Activated naive CD4-positive, alpha-beta T cell treated with anti-CD3 and anti-CD28 coated beads for 36 hours (primary cell): ENCODE measurements at regions of chr7 and their contacts with region 1.

Region 1: GRCh38 chr7:16564909-16565426 is 38.3 kb downstream of the LRRC72 start:
- DNase-seq: peak; percentile 33
- H3K4me3 Mint-ChIP-seq: no peak overlapping the region
- H3K27ac Mint-ChIP-seq: peak overlapping the region; percentile 68
- H3K4me1 Mint-ChIP-seq: peaks cover 18% of the 10 kb centered on the region
- H3K27me3 Mint-ChIP-seq: no peaks in the 10 kb centered on the region

Region 2: GRCh38 chr7:16078076-16078952 is 486.7 kb before region 1 on chr7:
- CTCF ChIA-PET with region 1: interaction called, 37 read pairs
- intact Hi-C with region 1: loop called (anchors 1 kb)
- DNase-seq: peak; percentile 30
- H3K4me3 Mint-ChIP-seq: no peak overlapping the region
- H3K27ac Mint-ChIP-seq: no peak overlapping the region
- H3K4me1 Mint-ChIP-seq: no peaks in the 10 kb centered on the region
- H3K27me3 Mint-ChIP-seq: no peaks in the 10 kb centered on the region

Region 3: DNA sequence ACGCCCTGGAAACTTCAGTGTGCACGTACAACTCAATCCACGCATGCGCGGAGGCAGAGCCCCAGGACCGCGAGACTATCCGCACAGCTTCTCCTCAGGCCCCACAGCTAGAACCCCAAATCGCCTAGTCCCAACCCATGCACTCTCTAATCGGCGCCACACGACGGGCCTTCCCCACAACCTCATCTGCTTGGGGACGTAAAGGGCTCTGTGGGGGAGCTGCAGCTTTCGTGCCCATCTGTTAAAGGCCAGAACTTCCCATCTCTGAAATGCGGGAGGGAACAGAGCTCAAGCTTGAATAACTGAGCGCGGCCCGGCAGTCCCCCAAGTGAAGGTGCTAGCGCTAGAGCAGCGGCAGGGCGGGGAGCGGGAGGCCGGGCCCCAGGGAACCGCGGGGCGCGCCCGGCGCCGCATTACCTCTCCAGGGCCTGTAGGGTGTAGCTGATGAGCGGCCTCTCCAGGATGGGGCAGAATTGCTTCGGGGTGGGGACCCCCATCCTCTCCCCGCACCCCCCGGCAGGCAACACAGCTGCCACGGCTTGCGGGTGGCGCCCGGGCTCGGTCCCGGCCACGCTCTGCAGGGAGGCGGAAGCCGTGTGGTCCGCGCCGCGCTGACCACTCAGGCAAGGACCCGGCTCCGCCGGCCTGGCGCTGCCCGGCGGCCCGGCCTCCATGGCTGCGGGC is 144.2 kb before region 1 on chr7:
- CTCF ChIA-PET with region 1: interaction called, 18 read pairs
- intact Hi-C with region 1: no loop called
- DNase-seq: peak; percentile 90
- H3K4me3 Mint-ChIP-seq: peak overlapping the region; percentile 92
- H3K27ac Mint-ChIP-seq: peak overlapping the region; percentile 89
- H3K4me1 Mint-ChIP-seq: peaks cover 13% of the 10 kb centered on the region
- H3K27me3 Mint-ChIP-seq: no peaks in the 10 kb centered on the region

Region 4: DNA sequence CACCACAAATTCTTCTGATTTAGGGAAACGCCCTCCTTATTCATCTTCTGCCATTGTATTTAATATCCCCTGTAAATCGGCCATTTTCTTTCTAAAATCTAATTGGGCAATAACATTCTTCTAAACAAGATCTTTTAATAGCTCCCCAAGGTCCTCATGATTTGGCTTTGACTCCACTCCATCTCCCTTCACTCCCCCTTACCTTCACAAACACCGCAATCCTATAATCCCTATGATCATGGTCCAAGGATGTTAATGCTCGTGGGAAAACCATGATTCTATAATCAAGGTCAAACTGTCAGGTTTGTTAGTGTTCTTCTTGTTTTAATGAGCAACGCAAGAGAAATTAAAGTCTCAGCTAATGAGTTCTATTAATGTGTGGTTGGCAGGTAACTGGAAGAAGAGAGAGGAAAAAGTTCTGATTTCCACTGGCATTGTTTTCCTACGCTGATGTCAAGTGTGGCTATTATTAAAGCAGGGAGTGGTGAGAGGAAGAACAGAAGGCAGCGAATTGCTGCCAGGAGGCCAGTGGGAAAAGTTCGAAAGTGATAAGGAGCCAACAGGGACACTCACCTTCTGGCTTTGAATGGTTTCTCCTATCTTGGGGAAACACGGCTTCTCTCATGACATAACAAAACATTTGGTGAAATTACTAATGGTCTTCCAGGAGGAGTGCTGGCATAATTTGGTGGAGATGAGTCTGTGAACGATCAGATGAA is 10.3 kb before region 1 on chr7:
- CTCF ChIA-PET with region 1: interaction called, 26 read pairs
- intact Hi-C with region 1: no loop called
- DNase-seq: no peak
- H3K4me3 Mint-ChIP-seq: no peak overlapping the region
- H3K27ac Mint-ChIP-seq: no peak overlapping the region
- H3K4me1 Mint-ChIP-seq: no peaks in the 10 kb centered on the region
- H3K27me3 Mint-ChIP-seq: peaks cover 2% of the 10 kb centered on the region

Region 5: GRCh38 chr7:16918288-16918895 is 353.4 kb after region 1 on chr7:
- CTCF ChIA-PET with region 1: interaction called, 4 read pairs
- intact Hi-C with region 1: loop called (anchors 2 kb)
- DNase-seq: peak; percentile 50
- H3K4me3 Mint-ChIP-seq: no peak overlapping the region
- H3K27ac Mint-ChIP-seq: no peak overlapping the region
- H3K4me1 Mint-ChIP-seq: peaks cover 7% of the 10 kb centered on the region
- H3K27me3 Mint-ChIP-seq: no peaks in the 10 kb centered on the region